ENCODE measurements at regions of chr14 and their contacts with region 1.

Region 1: DNA sequence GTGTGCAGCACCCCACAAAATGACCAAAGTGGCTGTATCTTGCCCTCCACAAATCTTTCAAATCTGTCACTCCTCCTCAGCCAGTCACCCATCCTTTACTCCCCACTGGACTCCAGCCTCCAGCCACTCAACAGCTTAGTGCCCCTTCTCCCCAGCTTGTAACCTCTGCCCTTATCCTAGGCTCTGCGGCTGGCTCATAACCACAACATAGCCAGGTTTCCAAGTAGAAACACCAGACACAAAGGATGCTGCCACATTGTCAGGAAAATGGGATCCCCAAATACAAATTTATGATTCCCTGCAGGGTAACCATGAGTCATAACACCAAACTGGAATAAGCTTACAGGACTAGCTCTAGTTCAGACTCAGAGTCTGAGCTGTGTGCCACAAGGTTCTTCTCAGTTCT is 15.1 kb downstream of the OXA1L start:
- DNase-seq: no peak
- CTCF ChIP-seq: no peak

Region 2: DNA sequence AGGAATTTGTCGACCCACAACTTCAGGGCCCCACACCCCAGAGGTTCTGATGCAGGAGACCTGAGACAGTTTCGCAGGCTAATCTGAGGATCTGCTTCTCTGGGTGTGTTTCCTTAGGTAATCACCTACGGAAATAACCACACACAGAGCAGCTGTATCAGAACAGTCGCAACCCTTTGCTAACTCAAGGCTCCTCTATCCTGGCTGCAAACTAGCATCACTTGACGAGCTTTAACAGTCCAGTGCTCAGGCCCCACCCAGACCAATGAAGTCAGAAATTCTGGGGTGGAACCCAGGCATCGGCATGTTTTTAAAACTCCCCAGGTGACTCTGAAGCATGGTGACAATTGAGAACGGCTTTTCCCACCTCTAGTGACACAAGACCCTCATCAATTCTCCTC is 13.0 kb after region 1 on chr14:
- CTCF ChIA-PET with region 1: interaction called, 14 read pairs
- POLR2A ChIA-PET with region 1: interaction called, 5 read pairs
- DNase-seq: peak; percentile 62
- CTCF ChIP-seq: no peak